ENCODE measurements at regions of chr2 and their contacts with region 1.

Region 1: GRCh38 chr2:37623971-37624900 is 47.2 kb downstream of the CDC42EP3 start:
- DNase-seq: peak; percentile 86
- H3K4me3 ChIP-seq: no peak overlapping the region
- H3K27ac ChIP-seq: peak overlapping the region; percentile 79
- H3K4me1 ChIP-seq: peaks cover 37% of the 10 kb centered on the region
- H3K27me3 ChIP-seq: no peaks in the 10 kb centered on the region
- CTCF ChIP-seq: no peak

Region 2: GRCh38 chr2:36450466-36451196 is 1173.6 kb before region 1 on chr2:
- CTCF ChIA-PET with region 1: no interaction called
- dilution Hi-C with region 1: no loop called
- in situ Hi-C with region 1: no loop called
- intact Hi-C with region 1: no loop called
- DNase-seq: peak; percentile 58
- H3K4me3 ChIP-seq: no peak overlapping the region
- H3K27ac ChIP-seq: peak overlapping the region; percentile 29
- H3K4me1 ChIP-seq: peaks cover 36% of the 10 kb centered on the region
- H3K27me3 ChIP-seq: no peaks in the 10 kb centered on the region
- CTCF ChIP-seq: no peak

Region 3: DNA sequence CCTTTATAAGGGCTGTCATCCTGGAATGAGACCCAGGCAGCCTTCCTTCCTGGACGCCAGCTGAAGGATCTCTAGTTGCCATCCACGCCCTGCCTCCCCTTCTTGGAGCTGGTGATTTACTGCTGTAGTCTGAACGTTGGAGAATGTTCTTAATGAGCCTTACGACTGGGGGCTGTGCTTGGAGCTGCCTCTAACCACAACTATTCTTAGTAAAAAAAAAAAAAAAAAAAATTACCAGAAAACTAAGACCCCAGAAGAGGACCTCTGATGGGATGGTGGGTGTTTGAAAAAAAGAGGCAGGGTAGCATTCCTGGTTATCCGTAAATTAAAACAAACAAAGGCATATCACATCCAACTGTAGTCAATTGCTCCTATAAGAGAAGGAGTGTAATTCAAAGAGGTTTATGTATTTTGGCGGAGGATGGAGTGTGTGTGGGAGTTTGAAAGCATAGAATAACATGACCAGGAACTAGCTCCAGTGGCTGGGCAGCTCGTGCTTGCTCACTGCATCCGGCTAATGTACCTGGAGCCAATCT is 174.4 kb before region 1 on chr2:
- CTCF ChIA-PET with region 1: no interaction called
- dilution Hi-C with region 1: no loop called
- in situ Hi-C with region 1: no loop called
- intact Hi-C with region 1: no loop called
- DNase-seq: no peak
- H3K4me3 ChIP-seq: no peak overlapping the region
- H3K27ac ChIP-seq: no peak overlapping the region
- H3K4me1 ChIP-seq: no peaks in the 10 kb centered on the region
- H3K27me3 ChIP-seq: no peaks in the 10 kb centered on the region
- CTCF ChIP-seq: no peak

Region 4: GRCh38 chr2:37585982-37586621 is 38.1 kb before region 1 on chr2:
- CTCF ChIA-PET with region 1: interaction called, 23 read pairs
- dilution Hi-C with region 1: loop called (anchors 5 kb)
- in situ Hi-C with region 1: no loop called
- intact Hi-C with region 1: no loop called
- DNase-seq: peak; percentile 94
- H3K4me3 ChIP-seq: no peak overlapping the region
- H3K27ac ChIP-seq: peak overlapping the region; percentile 50
- H3K4me1 ChIP-seq: peaks cover 77% of the 10 kb centered on the region
- H3K27me3 ChIP-seq: no peaks in the 10 kb centered on the region
- CTCF ChIP-seq: no peak

Region 5: DNA sequence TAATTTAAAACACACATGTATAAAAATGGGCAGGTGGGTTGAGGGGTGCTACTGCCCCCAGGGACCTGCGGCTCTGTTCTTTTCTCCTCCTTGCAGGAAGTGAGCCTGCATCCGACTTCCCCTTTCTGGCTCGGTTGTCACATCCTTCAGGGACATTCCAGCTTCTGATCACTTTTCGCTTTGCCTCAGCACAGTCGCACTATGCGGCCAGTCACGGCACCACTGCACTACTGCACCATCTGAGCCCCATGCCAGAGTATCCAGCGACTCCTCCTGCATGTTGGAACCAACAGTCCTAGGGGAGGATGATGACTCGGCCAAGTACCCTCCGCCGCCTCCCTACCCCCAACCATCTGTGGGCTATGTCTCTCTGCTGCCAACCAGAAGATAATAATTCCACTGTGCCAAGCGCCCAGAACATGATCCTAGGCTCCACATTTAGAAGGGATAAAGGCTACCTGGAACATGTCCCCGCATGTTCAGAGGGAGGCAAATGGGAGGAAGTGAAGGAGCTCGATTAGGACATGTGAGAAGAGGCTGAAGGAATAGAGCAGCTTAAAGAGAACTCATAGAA is 29.7 kb after region 1 on chr2:
- CTCF ChIA-PET with region 1: no interaction called
- dilution Hi-C with region 1: loop called (anchors 5 kb)
- in situ Hi-C with region 1: no loop called
- intact Hi-C with region 1: no loop called
- DNase-seq: peak; percentile 86
- H3K4me3 ChIP-seq: peak overlapping the region in 1 of 3 experiments; percentile 17
- H3K27ac ChIP-seq: peak overlapping the region; percentile 85
- H3K4me1 ChIP-seq: peaks cover 73% of the 10 kb centered on the region
- H3K27me3 ChIP-seq: no peaks in the 10 kb centered on the region
- CTCF ChIP-seq: no peak

Measured in mammary epithelial cell (primary cell).